ENCODE measurements at regions of chr18 and their contacts with region 1.

Region 1: GRCh38 chr18:43271593-43272432 is 5.5 kb downstream of the SYT4 start:
- DNase-seq: peak in 1 of 10 donors; percentile 43

Region 2: GRCh38 chr18:42298759-42299675 is 972.8 kb before region 1 on chr18:
- intact Hi-C with region 1: loop called (anchors 2 kb)
- DNase-seq: peak; percentile 77 to 98 (median 88)

Region 3: DNA sequence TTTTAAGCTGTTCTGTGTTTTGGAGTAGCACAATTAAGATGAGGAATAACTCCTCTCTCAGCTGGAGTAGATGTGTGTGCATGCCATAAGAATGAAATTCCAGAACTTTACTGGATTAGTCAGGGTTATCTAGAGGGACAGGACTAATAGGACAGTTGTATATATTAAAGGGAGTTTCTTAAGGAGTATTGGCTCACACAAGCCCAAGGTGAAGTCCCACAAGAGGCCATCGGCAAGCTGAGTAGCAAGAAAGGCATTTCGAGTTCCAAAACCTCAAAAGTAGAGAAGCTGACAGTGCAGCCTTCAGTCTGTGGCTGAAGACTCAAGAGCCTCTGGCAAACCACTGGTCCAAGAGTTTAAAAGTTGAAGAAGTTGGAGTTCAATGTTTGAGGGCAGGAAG is 270.0 kb before region 1 on chr18:
- intact Hi-C with region 1: no loop called
- DNase-seq: no peak

Region 4: DNA sequence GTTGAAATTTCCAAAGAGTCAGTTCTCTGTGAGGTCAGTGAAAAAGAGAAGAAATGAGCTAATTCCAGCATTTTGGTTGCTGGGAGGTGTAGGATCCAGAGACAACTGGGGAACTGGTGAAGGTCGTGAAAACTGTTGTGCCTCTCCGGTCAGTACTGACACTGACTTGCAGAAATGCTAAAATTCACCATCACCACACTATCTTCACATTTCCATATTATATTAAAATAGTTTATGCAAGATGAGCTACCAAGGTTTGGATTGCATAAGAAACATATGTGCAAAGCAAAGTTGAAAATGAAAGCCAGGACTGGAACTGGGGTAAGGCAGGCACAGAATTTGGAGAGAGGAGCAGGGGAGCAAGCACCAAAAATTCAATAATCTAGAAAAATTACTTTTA is 178.2 kb before region 1 on chr18:
- intact Hi-C with region 1: no loop called
- DNase-seq: no peak

Region 5: GRCh38 chr18:43571078-43571689 is 299.4 kb after region 1 on chr18:
- intact Hi-C with region 1: no loop called
- DNase-seq: no peak

Region 6: DNA sequence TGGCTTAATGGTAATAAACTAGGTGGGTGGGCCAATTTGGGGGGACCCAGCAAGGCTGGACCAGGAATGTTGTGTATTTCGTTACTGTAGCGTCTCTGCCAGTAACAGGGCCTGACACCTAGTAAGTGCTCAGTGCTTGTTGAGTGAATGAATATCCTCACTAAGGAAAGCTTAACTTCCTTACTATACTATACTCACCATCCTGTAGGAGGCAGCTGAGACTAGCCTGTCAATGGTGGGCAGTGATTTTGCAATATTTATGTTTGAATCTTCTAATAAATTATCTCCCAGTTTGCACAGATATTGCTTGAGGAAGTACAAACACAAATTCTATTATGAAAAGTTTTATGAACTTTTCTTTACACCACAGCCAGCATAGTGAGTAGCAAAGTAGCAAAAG is 376.2 kb after region 1 on chr18:
- intact Hi-C with region 1: no loop called
- DNase-seq: no peak

Measured in posterior cingulate gyrus (tissue), 11 donors.